ENCODE measurements at regions of chr4 and their contacts with region 1.

Region 1: GRCh38 chr4:52712172-52712990 is 38.8 kb downstream of the ERVMER34-1 start:
- DNase-seq: peak; percentile 96

Region 2: DNA sequence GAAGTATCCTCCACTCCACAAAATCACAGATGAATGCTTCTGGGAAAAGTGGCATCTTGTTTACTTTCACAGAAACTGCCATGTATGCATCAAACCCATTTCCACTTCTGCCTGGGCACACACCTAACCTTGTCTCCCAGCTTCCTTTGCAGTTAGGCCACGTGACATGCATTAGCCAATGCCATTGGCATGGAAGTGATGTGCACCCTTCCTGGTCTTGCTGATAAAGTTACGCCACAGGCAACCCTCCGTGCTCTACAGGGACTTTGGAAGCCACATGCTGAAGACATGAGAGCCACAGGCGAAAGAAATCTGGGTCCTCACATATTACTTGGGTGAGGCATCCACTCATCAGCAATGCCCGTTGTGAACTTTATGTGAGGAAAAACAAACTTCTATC is 176.6 kb before region 1 on chr4:
- CTCF ChIA-PET with region 1: no interaction called
- POLR2A ChIA-PET with region 1: no interaction called
- DNase-seq: no peak

Region 3: DNA sequence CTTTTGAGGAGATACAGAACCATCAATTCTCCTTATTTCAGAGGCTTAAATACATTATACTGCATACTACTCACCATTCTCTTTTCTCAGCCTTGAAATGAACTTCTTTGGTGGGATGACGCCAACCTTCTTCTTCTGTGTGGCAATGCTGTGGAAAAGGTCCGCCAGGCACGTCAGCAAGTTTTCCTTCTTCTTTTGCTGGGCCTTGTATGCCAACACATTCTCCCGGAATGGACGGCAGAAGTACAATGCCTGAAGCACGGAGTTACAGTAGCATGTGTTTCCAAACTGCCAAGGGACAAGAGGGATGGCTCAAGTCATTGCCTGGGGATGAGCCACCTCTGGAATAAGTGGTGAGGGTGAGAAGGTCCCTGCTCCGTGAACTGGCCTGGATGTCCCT is 84.5 kb before region 1 on chr4:
- CTCF ChIA-PET with region 1: no interaction called
- POLR2A ChIA-PET with region 1: no interaction called
- DNase-seq: no peak

Region 4: GRCh38 chr4:52659001-52659721 is 53.2 kb before region 1 on chr4 and contains the start of gene USP46:
- CTCF ChIA-PET with region 1: no interaction called
- POLR2A ChIA-PET with region 1: interaction called, 16 read pairs
- DNase-seq: peak; percentile 84

Region 5: GRCh38 chr4:52676536-52676935 is 35.8 kb before region 1 on chr4:
- CTCF ChIA-PET with region 1: no interaction called
- POLR2A ChIA-PET with region 1: no interaction called
- DNase-seq: no peak

Region 6: GRCh38 chr4:52701207-52701606 is 11.2 kb before region 1 on chr4:
- CTCF ChIA-PET with region 1: no interaction called
- POLR2A ChIA-PET with region 1: interaction called, 10 read pairs
- DNase-seq: no peak

Region 7: GRCh38 chr4:52728691-52729240 is 16.4 kb after region 1 on chr4:
- CTCF ChIA-PET with region 1: no interaction called
- POLR2A ChIA-PET with region 1: interaction called, 80 read pairs
- DNase-seq: no peak

Region 8: GRCh38 chr4:52755426-52755825 is 43.0 kb after region 1 on chr4:
- CTCF ChIA-PET with region 1: interaction called, 10 read pairs
- POLR2A ChIA-PET with region 1: interaction called, 4 read pairs
- DNase-seq: no peak

Region 9: DNA sequence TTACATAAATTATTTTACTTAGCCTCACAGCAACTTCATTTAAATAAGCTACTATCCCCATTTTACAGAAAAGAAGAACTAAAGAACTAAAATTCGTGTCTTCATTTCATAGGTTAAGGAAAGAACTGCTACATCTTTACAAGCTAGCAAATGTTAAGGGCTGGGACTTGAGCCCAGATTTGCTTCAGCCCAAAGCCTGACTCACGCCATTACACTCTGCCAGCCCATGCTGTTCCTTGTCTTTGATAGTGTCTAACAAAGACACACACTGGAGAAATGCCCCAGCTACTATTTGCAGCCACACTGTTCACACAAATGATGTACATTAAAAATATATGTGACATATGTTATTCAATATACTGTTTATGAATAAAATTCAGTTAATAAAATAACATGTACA is 67.8 kb after region 1 on chr4:
- CTCF ChIA-PET with region 1: no interaction called
- POLR2A ChIA-PET with region 1: no interaction called
- DNase-seq: no peak